WTC11 (cell line): ENCODE measurements at regions of chr6 and their contacts with region 1.

Region 1: GRCh38 chr6:36912586-36912985 is 26.8 kb downstream of the C6orf89 start:
- DNase-seq: no peak
- ATAC-seq: no peak
- H3K4me3 Mint-ChIP-seq: no peak overlapping the region
- H3K27ac Mint-ChIP-seq: no peak overlapping the region
- H3K4me1 Mint-ChIP-seq: peaks cover 5% of the 10 kb centered on the region
- H3K27me3 Mint-ChIP-seq: no peaks in the 10 kb centered on the region
- CTCF ChIP-seq: no peak

Region 2: DNA sequence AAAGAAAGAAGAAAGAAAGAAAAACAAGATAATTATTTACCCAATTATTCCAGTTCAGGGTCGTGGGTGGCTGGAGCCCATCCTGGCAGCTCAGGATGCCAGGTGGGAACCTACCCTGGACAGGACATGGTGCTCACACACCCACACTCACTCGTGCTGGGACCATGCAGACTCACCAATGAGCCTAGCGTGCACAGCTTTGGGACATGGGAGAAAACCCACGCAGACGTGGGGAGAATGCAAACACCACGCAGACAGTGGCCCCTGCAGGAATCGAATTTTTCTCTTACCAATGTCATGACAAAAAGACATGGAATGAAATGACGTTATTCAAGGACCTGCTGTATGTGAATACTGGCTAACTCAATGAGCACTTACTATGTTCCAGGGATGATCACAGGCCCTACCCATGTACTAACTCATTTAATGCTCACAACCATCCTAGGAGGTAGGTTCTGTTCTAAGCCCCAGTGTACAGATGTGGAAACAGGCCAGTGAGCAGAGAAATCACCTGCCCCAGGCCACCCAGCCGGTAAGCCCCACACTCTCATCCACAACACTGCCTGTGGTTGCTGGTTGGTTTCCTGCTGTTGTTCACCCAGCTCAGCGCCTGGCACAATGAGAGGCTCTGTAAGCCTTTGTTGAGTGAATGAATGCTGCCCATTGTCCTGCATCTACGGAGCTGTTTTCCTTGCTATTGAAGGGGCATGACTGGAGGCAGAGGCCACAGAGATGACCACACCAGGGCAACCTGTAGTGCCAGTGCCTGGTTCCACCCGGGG is 35.2 kb after region 1 on chr6:
- CTCF ChIA-PET with region 1: no interaction called
- POLR2A ChIA-PET with region 1: no interaction called
- DNase-seq: peak; percentile 4
- ATAC-seq: no peak
- H3K4me3 Mint-ChIP-seq: no peak overlapping the region
- H3K27ac Mint-ChIP-seq: no peak overlapping the region
- H3K4me1 Mint-ChIP-seq: peaks cover 24% of the 10 kb centered on the region
- H3K27me3 Mint-ChIP-seq: peaks cover 3% of the 10 kb centered on the region; the same call in 1 of the 2 replicates
- CTCF ChIP-seq: no peak

Region 3: DNA sequence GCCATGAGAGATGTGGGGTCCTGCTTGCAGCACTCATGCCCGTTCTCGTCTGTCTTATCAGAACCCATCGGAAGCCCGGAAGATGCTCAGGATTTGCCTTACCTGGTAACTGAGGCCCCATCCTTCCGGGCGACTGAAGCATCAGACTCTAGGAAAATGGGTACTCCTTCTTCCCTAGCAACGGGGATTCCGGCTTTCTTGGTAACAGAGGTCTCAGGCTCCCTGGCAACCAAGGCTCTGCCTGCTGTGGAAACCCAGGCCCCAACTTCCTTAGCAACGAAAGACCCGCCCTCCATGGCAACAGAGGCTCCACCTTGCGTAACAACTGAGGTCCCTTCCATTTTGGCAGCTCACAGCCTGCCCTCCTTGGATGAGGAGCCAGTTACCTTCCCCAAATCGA is 50.3 kb after region 1 on chr6:
- CTCF ChIA-PET with region 1: interaction called, 11 read pairs
- POLR2A ChIA-PET with region 1: no interaction called
- DNase-seq: peak; percentile 93
- ATAC-seq: peak; percentile 76
- H3K4me3 Mint-ChIP-seq: no peak overlapping the region
- H3K27ac Mint-ChIP-seq: no peak overlapping the region; the same call in 1 of the 2 replicates
- H3K4me1 Mint-ChIP-seq: peaks cover 15% of the 10 kb centered on the region
- H3K27me3 Mint-ChIP-seq: no peaks in the 10 kb centered on the region
- CTCF ChIP-seq: no peak